ENCODE measurements at regions of chr15 and their contacts with region 1.

Region 1: DNA sequence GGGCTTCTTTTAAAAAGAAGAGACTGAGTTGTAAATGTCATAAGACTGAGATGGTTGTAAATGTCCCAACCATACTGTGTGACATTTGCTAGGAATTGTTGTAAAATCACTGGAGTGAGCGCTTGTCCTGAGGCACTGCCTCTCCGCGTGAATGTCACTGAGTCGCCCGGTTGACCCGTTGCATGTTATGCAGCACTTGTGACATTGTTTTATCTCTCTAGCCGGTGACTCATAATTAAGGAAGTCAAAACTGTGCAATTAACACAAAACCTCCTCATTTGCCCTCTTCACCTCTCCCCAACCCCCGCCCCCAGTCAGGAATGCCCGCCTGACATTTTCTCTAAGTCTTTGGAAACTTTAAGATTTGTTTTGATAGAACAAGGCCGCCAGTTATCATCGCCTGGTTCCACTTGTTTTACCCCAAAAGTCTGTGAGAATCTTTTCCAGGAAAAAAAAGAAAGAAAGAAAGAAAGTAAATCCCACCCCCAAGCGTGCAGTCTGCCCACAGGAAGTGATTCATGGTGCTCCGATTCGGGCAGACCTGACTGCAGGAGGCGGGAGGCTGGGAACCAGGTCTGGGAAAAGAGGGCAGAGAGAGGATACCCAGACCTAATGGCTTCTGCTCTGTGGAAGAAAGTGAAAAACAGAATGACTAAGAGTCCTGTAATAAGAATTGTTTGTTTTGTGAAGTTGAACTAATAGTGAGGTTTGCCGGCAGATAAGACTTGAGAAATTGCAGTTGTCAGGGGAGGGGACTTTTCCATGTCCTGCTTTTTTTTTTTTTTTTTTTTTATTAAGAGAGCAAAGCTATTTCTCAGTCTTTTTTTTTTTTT is 84.8 kb downstream of the SMAD3 start:
- DNase-seq: peak; percentile 90 to 96 (median 94)
- H3K4me3 ChIP-seq: peak overlapping the region in 2 of 3 experiments; percentile 2 to 31
- H3K4me3 Mint-ChIP-seq: peak overlapping the region; percentile 69 to 82
- H3K27ac ChIP-seq: peak overlapping the region; percentile 67 to 93
- H3K27ac Mint-ChIP-seq: peak overlapping the region; percentile 94 to 99 (median 98)
- H3K4me1 ChIP-seq: peaks cover 57 to 58% of the 10 kb centered on the region in 2 donors
- H3K4me1 Mint-ChIP-seq: peaks cover 67% of the 10 kb centered on the region
- H3K27me3 ChIP-seq: no peaks in the 10 kb centered on the region
- H3K27me3 Mint-ChIP-seq: peaks cover 0 to 2% (median 0%) of the 10 kb centered on the region in 3 donors
- CTCF ChIP-seq: no peak

Region 2: DNA sequence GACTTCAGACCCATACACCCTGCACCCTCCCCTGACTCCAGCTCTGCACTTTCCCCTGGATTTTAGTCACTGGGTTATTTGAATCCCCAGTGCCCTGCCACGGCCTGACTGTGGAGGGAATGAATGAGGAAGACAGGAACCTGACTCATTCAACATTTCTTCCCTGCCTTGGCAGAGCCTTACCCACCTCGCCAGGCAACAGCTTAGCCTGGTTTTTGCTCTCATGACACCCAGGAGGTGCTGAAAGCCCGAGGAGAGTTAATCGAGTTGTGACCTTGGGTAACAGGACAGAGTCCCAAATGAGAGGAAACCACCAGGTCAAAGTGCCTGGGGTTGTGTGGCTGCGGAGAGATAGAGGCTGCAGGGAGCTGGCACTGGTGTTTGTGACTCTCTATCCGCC is 319.9 kb before region 1 on chr15:
- intact Hi-C with region 1: no loop called
- DNase-seq: peak; percentile 42 to 71 (median 42)
- H3K4me3 ChIP-seq: no peak overlapping the region
- H3K4me3 Mint-ChIP-seq: no peak overlapping the region
- H3K27ac ChIP-seq: no peak overlapping the region
- H3K27ac Mint-ChIP-seq: peak overlapping the region in 4 of 7 donors; percentile 15 to 61 (median 46)
- H3K4me1 ChIP-seq: peaks cover 47 to 54% of the 10 kb centered on the region in 2 donors
- H3K4me1 Mint-ChIP-seq: peaks cover 50% of the 10 kb centered on the region
- H3K27me3 ChIP-seq: no peaks in the 10 kb centered on the region
- H3K27me3 Mint-ChIP-seq: no peaks in the 10 kb centered on the region
- CTCF ChIP-seq: no peak

Region 3: DNA sequence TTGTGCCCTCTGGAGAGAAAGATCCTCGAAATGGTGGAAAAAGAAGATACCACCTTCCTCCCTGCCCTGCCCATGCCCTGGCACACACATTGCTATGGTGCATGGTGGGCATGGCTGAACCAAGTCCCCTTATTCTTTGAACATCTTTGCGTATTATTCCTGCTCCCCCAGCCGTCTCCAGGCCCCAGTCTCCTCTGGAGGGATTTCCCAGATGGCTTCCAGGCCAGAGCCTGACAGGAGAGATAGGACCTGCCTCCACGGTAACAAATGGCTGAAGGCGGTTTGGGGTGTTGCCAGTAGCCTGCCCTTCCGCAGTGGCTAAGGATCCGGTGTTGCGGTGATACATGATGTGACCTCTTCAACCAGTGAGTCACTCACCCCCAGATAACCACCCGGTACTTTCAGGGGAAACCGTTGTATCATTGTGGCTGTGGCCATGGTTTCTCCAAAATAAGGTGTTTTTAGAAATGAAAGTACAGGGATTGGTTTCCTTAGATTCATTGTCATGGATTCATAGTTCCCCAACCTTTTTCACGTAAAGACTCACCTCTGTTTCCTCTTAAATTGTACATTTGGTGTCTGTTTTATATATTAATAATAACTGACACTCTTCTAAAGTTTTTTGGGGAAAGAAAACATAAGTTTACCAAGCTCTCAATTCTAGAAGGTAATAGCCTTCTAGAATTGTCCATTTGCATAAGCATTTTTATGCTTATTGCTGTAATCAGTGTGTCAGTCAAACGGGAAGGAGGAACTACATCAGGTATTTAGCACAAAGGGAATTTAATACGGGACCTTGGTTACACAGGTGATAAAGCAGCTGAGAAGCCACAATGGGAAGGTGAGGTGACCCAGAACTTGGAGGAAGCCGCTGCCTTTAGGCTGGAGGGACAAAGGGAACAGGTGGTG is 58.9 kb before region 1 on chr15:
- intact Hi-C with region 1: loop called in 1 of 2 experiments (anchors 5 kb)
- DNase-seq: peak; percentile 96 to 98 (median 98)
- H3K4me3 ChIP-seq: peak overlapping the region in 1 of 3 experiments; percentile 46
- H3K4me3 Mint-ChIP-seq: peak overlapping the region; percentile 64 to 65
- H3K27ac ChIP-seq: peak overlapping the region; percentile 73 to 98
- H3K27ac Mint-ChIP-seq: peak overlapping the region; percentile 95 to 99 (median 98)
- H3K4me1 ChIP-seq: peaks cover 76 to 89% of the 10 kb centered on the region in 2 donors
- H3K4me1 Mint-ChIP-seq: peaks cover 97% of the 10 kb centered on the region
- H3K27me3 ChIP-seq: no peaks in the 10 kb centered on the region
- H3K27me3 Mint-ChIP-seq: peaks cover 0 to 4% (median 2%) of the 10 kb centered on the region in 3 donors
- CTCF ChIP-seq: no peak

Region 4: DNA sequence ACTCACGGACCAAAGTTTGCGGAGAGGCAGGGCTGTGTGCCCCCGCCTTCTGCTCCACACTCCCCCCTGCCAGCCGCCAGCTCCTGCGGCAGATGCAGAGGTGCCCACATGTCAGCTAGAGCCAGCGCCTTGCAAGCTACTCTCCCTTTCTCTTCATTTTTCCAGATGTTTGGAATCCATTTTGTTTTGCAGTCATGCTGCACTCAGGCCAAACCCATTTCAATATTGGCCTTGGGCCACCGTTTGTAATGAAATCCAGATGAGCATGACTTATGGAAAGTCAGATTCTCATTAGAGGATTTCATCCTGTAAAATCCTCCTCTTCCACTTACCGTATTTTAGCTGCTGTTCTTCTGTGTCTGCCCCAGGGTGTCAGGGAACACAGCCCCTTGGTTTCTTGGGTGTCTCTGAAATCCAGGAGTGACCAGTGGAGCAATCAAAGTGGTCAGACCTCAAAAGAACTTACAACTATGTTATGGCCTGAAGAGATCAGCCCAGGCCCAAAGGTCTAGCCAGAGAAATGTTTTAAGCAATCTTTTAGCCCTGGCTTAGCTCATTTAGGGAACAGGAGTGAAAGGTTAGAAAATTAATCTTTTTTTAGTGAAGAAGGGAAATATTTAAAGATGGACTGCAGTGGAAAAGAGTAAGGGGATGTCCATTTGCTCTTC is 38.4 kb after region 1 on chr15:
- intact Hi-C with region 1: loop called in 1 of 2 experiments (anchors 5 kb)
- DNase-seq: no peak
- H3K4me3 ChIP-seq: no peak overlapping the region
- H3K4me3 Mint-ChIP-seq: no peak overlapping the region
- H3K27ac ChIP-seq: peak overlapping the region in 1 of 2 donors; percentile 44
- H3K27ac Mint-ChIP-seq: peak overlapping the region in 2 of 7 donors; percentile 55 to 67
- H3K4me1 ChIP-seq: peaks cover 10 to 16% of the 10 kb centered on the region in 2 donors
- H3K4me1 Mint-ChIP-seq: peaks cover 19% of the 10 kb centered on the region
- H3K27me3 ChIP-seq: no peaks in the 10 kb centered on the region
- H3K27me3 Mint-ChIP-seq: peaks cover 0 to 2% (median 2%) of the 10 kb centered on the region in 3 donors
- CTCF ChIP-seq: no peak